ENCODE measurements at regions of chr4 and their contacts with region 1.

Region 1: DNA sequence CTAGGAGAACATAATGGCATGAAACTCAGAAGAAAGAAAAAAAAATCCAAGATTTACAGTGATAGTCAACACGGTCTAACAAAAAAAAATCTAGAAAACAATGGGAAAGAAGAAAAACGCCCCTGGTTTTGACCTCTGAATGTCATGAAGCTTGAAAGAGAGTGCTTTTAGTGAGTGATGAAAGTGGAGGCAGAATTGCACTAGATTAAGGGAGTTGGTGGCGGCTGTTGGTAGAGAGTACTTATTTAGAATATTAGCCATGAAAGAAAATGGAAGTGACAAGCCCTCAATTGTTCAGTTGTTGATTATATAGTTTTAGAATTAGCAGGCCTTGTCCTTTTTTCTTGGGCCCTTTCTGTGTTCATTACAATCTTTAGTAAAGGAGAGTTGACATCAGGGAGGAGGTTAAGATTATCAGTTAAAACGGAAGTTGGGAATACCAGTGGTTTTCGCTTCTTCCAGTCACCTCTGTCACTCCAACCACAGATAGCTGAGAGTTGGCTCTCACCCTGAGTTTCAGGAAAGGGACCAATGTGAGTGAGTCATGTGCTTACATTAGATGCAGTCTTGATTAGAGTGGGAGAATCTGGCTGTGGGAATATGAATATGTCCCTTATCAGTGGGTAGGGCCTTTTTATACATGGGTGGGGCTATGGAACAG is 29.7 kb downstream of the EREG start:
- DNase-seq: no peak
- H3K4me3 Mint-ChIP-seq: peak overlapping the region; percentile 27
- H3K27ac Mint-ChIP-seq: peak overlapping the region; percentile 87
- H3K4me1 Mint-ChIP-seq: peaks cover 48% of the 10 kb centered on the region
- H3K27me3 Mint-ChIP-seq: no peaks in the 10 kb centered on the region
- CTCF ChIP-seq: no peak

Region 2: DNA sequence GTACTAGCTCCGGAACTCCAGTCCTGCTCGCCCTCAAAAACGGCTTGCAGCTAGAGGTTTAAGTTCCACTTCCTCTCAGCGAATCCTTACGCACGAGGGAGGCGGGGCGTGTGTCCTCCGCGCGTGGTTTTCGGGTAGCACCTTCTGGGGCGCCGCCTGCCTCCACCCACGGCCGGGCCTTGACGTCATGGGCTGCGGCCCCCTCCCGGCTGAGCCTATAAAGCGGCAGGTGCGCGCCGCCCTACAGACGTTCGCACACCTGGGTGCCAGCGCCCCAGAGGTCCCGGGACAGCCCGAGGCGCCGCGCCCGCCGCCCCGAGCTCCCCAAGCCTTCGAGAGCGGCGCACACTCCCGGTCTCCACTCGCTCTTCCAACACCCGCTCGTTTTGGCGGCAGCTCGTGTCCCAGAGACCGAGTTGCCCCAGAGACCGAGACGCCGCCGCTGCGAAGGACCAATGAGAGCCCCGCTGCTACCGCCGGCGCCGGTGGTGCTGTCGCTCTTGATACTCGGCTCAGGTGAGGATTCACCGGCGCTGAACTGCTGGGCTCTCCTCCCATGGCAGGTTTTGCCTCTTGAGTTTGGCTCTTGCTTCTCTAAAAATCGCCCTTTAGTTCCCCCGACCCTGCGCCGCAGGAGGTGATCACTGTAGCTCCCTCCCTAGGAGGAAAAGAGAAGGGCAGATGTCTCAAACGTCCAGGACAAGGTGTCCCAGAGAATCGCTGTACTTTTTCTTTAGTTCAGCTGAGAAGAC is 50.5 kb after region 1 on chr4 and contains the start of gene AREG:
- CTCF ChIA-PET with region 1: interaction called, 7 read pairs
- intact Hi-C with region 1: loop called (anchors 2 kb)
- DNase-seq: peak; percentile 89
- H3K4me3 Mint-ChIP-seq: peak within 1 kb of the TSS; percentile 84
- H3K27ac Mint-ChIP-seq: peak within 1 kb of the TSS; percentile 96
- H3K4me1 Mint-ChIP-seq: peaks cover 6% of the 10 kb centered on the region
- H3K27me3 Mint-ChIP-seq: no peaks in the 10 kb centered on the region
- CTCF ChIP-seq: peak; percentile 28
- total RNA-seq, gene AREG: 230 and 281 TPM in 2 replicates

Region 3: DNA sequence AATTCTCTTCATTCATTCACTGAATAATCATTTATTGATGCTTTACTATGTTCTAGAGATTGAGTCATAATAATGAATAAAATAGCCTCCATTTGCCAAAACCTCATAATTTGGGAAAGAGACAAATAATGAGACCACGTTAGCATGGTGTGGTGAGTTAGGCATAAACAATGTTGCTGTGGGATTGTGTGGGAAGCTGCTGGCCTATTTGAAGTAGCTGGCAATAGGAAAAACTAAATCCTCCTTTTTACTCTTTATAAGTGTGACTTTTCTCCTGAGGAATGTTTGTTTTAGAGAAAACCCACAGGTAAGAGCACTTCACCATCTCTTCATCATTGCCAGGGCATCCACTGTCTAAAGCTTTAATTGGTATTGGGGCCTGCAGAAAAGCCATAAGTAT is 145.6 kb after region 1 on chr4:
- CTCF ChIA-PET with region 1: no interaction called
- intact Hi-C with region 1: no loop called
- DNase-seq: no peak
- H3K4me3 Mint-ChIP-seq: no peak overlapping the region
- H3K27ac Mint-ChIP-seq: peak overlapping the region; percentile 99
- H3K4me1 Mint-ChIP-seq: peaks cover 22% of the 10 kb centered on the region
- H3K27me3 Mint-ChIP-seq: no peaks in the 10 kb centered on the region
- CTCF ChIP-seq: no peak